ENCODE measurements at regions of chr5 and their contacts with region 1.

Region 1: DNA sequence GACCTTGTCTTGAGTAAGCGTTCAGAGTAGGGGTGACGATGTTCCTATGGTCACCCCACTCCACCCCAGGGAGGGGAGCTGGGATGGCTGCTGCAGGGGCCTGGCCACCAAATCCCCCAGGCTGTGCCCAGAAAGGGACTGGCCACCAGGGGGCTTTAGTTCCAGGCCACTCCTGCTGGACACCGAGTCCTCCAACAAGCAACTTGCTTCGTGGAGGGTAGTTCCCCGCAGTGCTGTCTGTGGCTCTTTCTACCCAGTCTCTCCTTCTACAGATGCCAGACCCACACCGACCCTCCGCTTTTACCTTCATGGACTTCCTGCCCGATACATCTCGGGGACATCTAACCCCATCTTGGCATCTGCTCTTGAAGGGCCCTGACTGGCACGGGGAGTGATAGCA is 35.7 kb upstream of the GABRP start:
- DNase-seq: peak; percentile 36 to 42
- ATAC-seq: peak in 1 of 2 experiments; percentile 60; a peak in 3 of 6 replicates
- H3K4me3 ChIP-seq: no peak overlapping the region
- H3K27ac ChIP-seq: no peak overlapping the region
- H3K4me1 ChIP-seq: peaks cover 14% of the 10 kb centered on the region
- CTCF ChIP-seq: peak; percentile 26; the same call in 1 of the 3 replicates
- EP300 ChIP-seq: no peak
- POLR2A ChIP-seq: no peak
- RAD21 ChIP-seq: peak; percentile 15 to 23; a peak in 1 of 5 replicates

Region 2: DNA sequence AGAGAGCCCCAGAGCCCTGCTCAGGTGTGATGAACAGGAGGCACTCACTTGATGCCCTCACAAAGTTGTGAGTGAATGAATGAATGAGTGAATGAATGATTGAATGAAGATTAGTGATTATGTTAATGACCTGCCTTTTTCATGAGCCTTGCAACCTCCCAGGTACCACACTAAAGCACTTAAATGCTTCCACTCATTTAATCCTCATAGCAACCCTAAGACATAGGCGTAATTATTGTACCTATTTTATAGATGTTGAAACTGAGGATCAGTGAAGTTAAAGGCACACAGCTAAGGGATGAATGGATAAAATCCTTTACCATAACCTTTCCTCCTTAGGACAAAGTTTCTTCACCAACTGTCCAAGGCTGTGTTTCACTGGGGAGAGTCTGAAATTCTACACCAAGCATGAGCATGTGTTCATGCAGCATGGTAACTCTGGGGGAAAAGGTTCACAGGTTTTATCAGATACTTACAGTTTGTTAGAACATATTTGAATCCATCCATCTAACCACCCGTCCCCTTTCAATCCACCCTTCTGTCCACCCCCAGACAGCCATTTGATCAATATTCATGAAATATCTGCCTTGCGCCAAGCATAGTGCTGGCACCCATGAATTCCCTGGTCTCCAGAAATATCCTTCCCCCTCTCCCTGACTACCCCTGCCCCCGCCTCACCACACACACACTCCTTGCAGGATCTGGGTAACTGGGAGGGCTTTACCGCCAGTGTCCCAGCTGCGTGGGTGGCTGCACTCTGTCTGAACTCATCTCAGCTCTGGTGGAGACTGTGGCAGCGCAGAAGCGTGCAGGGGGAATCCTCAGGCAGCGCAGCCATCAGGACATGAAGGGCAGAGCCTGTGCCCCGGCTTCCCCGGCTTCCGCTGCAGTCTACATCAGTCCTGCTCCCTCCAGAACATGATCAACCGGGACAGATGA is 250.5 kb before region 1 on chr5:
- CTCF ChIA-PET with region 1: no interaction called
- POLR2A ChIA-PET with region 1: no interaction called
- DNase-seq: no peak
- ATAC-seq: no peak
- H3K4me3 ChIP-seq: no peak overlapping the region
- H3K27ac ChIP-seq: no peak overlapping the region
- H3K4me1 ChIP-seq: no peaks in the 10 kb centered on the region
- CTCF ChIP-seq: no peak
- EP300 ChIP-seq: no peak
- POLR2A ChIP-seq: no peak
- RAD21 ChIP-seq: no peak

Region 3: DNA sequence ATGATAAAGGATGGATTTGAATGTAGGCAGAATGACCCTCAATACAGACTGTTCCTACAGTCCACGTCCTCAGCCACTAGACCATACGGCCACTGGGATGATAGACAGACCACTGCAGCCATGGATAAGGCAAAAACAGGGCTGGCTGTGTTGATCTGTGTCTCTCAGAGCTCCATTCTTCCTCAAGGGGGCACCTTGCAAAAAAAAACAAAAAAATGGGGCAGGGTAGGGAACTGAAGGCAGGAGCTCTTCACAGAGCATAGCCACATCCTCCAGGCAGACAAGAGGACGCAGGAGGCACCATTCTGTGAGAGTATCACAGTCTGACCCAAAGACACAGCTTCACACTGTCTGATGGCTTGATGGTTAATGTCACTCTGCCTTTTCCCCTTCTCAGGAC is 25.5 kb before region 1 on chr5:
- CTCF ChIA-PET with region 1: interaction called, 14 read pairs
- POLR2A ChIA-PET with region 1: no interaction called
- DNase-seq: no peak
- ATAC-seq: no peak
- H3K4me3 ChIP-seq: no peak overlapping the region
- H3K27ac ChIP-seq: no peak overlapping the region
- H3K4me1 ChIP-seq: no peaks in the 10 kb centered on the region
- CTCF ChIP-seq: no peak
- EP300 ChIP-seq: no peak
- POLR2A ChIP-seq: no peak
- RAD21 ChIP-seq: no peak

Region 4: DNA sequence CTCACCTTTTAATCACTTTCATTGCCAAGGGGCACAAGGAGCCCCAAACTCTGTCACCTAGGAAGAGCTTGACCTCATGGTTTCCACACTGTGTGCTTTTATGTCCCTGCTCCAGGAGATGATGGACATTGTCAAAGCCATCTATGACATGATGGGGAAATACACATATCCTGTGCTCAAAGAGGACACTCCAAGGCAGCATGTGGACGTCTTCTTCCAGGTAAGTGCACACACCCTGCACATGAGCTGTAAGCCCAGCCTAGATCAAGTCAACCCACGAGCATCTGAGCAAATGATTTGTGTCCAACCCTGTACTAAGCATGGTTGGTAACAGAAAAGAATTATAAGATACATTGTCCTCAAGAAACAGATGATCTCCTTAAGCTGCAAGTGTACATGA is 15.2 kb before region 1 on chr5:
- CTCF ChIA-PET with region 1: interaction called, 21 read pairs
- POLR2A ChIA-PET with region 1: no interaction called
- DNase-seq: no peak
- ATAC-seq: peak in 1 of 2 experiments; percentile 19; a peak in 1 of 6 replicates
- H3K4me3 ChIP-seq: no peak overlapping the region
- H3K27ac ChIP-seq: no peak overlapping the region
- H3K4me1 ChIP-seq: no peaks in the 10 kb centered on the region
- CTCF ChIP-seq: no peak
- EP300 ChIP-seq: no peak
- POLR2A ChIP-seq: no peak
- RAD21 ChIP-seq: no peak

Region 5: GRCh38 chr5:170769246-170769645 is 21.4 kb after region 1 on chr5:
- CTCF ChIA-PET with region 1: interaction called, 23 read pairs
- POLR2A ChIA-PET with region 1: no interaction called
- DNase-seq: no peak
- ATAC-seq: no peak
- H3K4me3 ChIP-seq: no peak overlapping the region
- H3K27ac ChIP-seq: no peak overlapping the region
- H3K4me1 ChIP-seq: no peaks in the 10 kb centered on the region
- CTCF ChIP-seq: no peak
- EP300 ChIP-seq: no peak
- POLR2A ChIP-seq: no peak
- RAD21 ChIP-seq: no peak

Region 6: GRCh38 chr5:170782438-170782837 is 34.6 kb after region 1 on chr5:
- CTCF ChIA-PET with region 1: interaction called, 240 read pairs
- POLR2A ChIA-PET with region 1: no interaction called
- DNase-seq: no peak
- ATAC-seq: no peak
- H3K4me3 ChIP-seq: no peak overlapping the region
- H3K27ac ChIP-seq: no peak overlapping the region
- H3K4me1 ChIP-seq: no peaks in the 10 kb centered on the region
- CTCF ChIP-seq: no peak
- EP300 ChIP-seq: no peak
- POLR2A ChIP-seq: no peak
- RAD21 ChIP-seq: no peak

Region 7: DNA sequence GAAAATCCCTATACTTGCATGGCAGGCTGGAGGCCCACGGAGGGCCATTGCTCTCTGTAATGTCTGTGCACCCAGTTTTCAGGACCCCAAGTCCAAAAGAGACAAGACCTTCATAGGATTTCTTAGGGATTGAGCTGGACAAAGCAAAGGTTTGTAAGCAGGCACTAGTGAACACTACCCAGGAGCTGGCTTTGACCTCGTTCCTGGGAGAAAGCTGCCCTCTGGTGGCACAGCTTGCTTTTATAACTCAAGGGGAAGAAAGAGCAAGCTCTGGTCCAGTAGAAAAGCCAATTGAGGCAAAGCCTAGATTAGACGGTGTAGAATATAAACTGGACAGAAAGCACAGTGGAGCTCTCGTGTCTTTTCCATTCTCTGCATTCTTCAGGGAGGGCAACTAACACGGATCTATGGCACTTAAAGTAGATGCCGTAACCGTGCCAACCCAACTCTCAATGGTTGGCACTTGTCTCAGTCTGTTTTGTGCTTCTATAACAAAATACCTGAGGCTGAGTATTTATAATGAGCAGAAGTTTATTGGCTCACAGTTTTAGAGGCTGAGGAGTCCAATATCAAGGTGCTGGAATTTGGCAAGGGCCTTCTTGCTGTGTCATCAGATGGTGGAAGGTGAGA is 43.6 kb after region 1 on chr5:
- CTCF ChIA-PET with region 1: interaction called, 240 read pairs
- POLR2A ChIA-PET with region 1: interaction called, 6 read pairs
- DNase-seq: peak; percentile 53 to 66
- ATAC-seq: peak; percentile 87 to 95
- H3K4me3 ChIP-seq: no peak overlapping the region
- H3K27ac ChIP-seq: no peak overlapping the region
- H3K4me1 ChIP-seq: no peaks in the 10 kb centered on the region
- CTCF ChIP-seq: peak; percentile 73
- EP300 ChIP-seq: no peak
- POLR2A ChIP-seq: no peak
- RAD21 ChIP-seq: peak; percentile 84 to 85

Region 8: DNA sequence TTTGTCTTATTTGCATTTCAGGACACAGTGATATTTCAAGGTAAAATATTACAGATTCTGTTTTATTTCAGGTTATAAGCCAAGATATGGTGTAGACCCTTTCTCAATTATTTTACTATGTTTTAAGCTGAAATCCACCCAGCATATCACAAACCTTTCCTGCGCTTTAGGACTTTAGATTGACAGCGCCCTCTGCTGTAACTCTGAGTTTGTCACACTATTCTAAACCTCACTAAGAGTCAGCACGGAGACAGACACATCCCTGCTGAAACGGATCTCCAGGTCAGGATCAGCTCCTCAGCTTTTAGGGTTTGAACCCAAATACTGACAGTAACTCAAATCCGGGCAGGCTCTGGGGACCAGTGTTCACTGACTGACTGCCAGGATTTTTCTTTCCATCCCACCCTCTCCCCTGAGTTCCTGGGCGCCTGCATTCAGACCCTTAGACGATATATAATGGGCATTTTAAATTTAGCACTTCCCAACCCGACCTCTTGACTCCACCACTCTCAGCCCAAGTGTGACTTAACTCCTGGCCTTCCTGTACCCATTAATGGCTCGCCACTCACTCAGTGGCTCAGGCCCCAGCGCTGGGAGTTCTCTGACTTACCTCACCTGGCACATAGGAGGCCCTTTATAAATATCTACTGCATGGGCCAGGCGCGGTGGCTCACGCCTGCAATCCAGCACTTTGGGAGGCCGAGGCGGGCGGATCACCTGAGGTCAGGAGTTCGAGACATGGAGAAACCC is 594.7 kb after region 1 on chr5:
- CTCF ChIA-PET with region 1: interaction called, 13 read pairs
- POLR2A ChIA-PET with region 1: no interaction called
- DNase-seq: peak; percentile 40 to 76
- ATAC-seq: peak; percentile 96 to 98
- H3K4me3 ChIP-seq: no peak overlapping the region
- H3K27ac ChIP-seq: no peak overlapping the region
- H3K4me1 ChIP-seq: 0 out of 3 replicates have a peak, but pooled peaks cover 1% of the 10 kb centered on the region
- CTCF ChIP-seq: peak; percentile 84
- EP300 ChIP-seq: no peak
- POLR2A ChIP-seq: no peak
- RAD21 ChIP-seq: peak; percentile 64 to 81

Measured in A549 (cell line).